Activated naive CD4-positive, alpha-beta T cell treated with anti-CD3 and anti-CD28 coated beads for 36 hours (primary cell): ENCODE measurements at regions of chr17 and their contacts with region 1.

Region 1: GRCh38 chr17:82892899-82893565 is 53.2 kb upstream of the ZNF750 start:
- DNase-seq: peak; percentile 77
- H3K4me3 Mint-ChIP-seq: peak overlapping the region; percentile 67
- H3K27ac Mint-ChIP-seq: peak overlapping the region; percentile 83
- H3K4me1 Mint-ChIP-seq: peaks cover 39% of the 10 kb centered on the region
- H3K27me3 Mint-ChIP-seq: no peaks in the 10 kb centered on the region

Region 2: GRCh38 chr17:82881900-82882714 is 10.9 kb before region 1 on chr17:
- CTCF ChIA-PET with region 1: interaction called, 3 read pairs
- intact Hi-C with region 1: loop called (anchors 1 kb)
- DNase-seq: no peak
- H3K4me3 Mint-ChIP-seq: peak overlapping the region; percentile 70
- H3K27ac Mint-ChIP-seq: peak overlapping the region; percentile 89
- H3K4me1 Mint-ChIP-seq: peaks cover 75% of the 10 kb centered on the region
- H3K27me3 Mint-ChIP-seq: no peaks in the 10 kb centered on the region

Region 3: GRCh38 chr17:83079352-83079747 is 186.3 kb after region 1 on chr17 and contains the start of gene METRNL:
- CTCF ChIA-PET with region 1: interaction called, 3 read pairs
- intact Hi-C with region 1: loop called (anchors 5 kb)
- DNase-seq: peak; percentile 54
- H3K4me3 Mint-ChIP-seq: peak within 1 kb of the TSS; percentile 38
- H3K27ac Mint-ChIP-seq: no peak within 1 kb of the TSS
- H3K4me1 Mint-ChIP-seq: peaks cover 19% of the 10 kb centered on the region
- H3K27me3 Mint-ChIP-seq: peaks cover 15% of the 10 kb centered on the region
- total RNA-seq, gene METRNL: 14.4 to 15.2 TPM